WTC11 (cell line): ENCODE measurements at regions of chr2 and their contacts with region 1.

Region 1: DNA sequence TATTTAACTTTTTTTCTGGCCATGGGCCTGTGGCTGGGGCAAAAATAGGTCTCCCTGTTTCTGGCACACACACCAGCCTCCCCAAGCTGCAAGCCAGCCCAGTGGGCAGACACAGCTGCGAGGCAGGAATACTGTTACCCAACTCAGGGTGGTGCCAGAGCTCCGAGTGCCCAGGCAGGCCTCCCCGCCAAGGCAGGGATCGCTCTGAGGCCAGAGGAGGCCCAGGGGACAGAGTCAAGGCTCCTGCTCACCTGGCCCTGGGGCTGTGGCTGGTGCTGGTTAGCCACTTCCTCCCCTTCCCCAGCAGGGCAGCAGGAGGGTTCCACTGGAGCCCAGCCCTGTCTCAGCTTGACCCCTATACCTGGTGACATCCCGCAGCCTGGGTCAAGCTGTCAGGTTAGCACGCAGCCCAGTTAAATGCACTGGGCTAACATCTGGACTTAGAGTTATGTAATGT is 67.1 kb upstream of the EPAS1 start:
- DNase-seq: peak; percentile 28
- ATAC-seq: peak; percentile 43
- H3K4me3 Mint-ChIP-seq: no peak overlapping the region; the same call in 1 of the 2 replicates
- H3K27ac Mint-ChIP-seq: peak overlapping the region; percentile 82
- H3K4me1 Mint-ChIP-seq: peaks cover 46% of the 10 kb centered on the region
- H3K27me3 Mint-ChIP-seq: no peaks in the 10 kb centered on the region
- CTCF ChIP-seq: no peak

Region 2: GRCh38 chr2:46275973-46276372 is 45.8 kb after region 1 on chr2:
- CTCF ChIA-PET with region 1: interaction called, 11 read pairs
- POLR2A ChIA-PET with region 1: no interaction called
- DNase-seq: peak; percentile 71
- ATAC-seq: peak; percentile 96
- H3K4me3 Mint-ChIP-seq: no peak overlapping the region
- H3K27ac Mint-ChIP-seq: no peak overlapping the region
- H3K4me1 Mint-ChIP-seq: peaks cover 10% of the 10 kb centered on the region
- H3K27me3 Mint-ChIP-seq: no peaks in the 10 kb centered on the region; the same call in 1 of the 2 replicates
- CTCF ChIP-seq: no peak

Region 3: GRCh38 chr2:46296840-46297545 is 66.8 kb after region 1 on chr2 and contains the start of gene EPAS1:
- CTCF ChIA-PET with region 1: interaction called, 19 read pairs
- POLR2A ChIA-PET with region 1: interaction called, 3 read pairs
- DNase-seq: peak; percentile 92
- ATAC-seq: peak; percentile 84
- H3K4me3 Mint-ChIP-seq: peak within 1 kb of the TSS; percentile 83
- H3K27ac Mint-ChIP-seq: no peak within 1 kb of the TSS
- H3K4me1 Mint-ChIP-seq: peaks cover 38% of the 10 kb centered on the region
- H3K27me3 Mint-ChIP-seq: peaks cover 78% of the 10 kb centered on the region
- CTCF ChIP-seq: no peak
- total RNA-seq, gene EPAS1: 4.5 to 8.5 TPM (median 4.7 TPM) in 3 replicates